ENCODE measurements at regions of chr11 and their contacts with region 1.

Region 1: DNA sequence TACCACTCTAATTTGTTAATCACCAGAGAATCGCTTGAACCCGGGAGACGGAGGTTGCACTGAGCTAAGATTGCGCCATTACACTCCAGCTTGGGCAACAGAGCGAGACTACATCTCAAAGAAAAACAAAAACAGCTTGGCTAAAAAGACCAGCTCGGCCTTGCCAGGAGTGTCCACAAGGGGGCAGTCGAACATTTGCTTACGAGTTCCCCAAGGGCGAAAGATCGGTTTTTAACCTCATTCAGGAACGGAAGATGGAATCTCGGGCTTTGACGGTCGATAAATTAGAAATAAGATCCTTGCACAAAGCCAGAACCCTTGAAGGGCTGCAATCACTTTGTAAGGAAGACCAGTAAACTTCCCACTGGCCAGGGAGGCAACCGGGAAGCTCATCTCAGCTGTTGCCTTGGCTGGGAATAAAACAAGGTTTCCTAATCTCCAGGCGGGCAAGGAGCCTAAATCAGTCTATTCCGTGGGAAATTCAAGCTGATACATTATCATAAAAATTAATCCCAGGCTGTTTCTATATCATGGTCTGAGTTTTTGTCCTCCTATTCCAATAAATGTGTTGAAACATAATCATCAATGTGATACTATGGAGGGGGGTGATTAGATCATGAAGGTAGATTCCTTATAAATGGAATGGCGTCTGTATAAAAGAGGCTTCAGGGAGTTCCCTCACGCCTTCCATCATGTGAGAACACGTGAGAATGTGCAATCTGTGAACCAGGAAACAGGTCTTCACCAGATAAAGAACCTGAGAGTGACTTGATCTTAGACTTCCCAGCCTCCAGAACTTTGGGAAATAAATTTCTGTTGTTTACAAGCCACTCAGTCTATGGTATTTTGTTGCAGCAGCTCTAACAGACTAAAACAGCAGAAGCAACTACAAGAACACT is 14.9 kb upstream of the SLC29A2 start:
- DNase-seq: peak; percentile 70 to 81 (median 76)
- H3K4me3 ChIP-seq: peak overlapping the region in 1 of 2 donors; percentile 31
- H3K4me3 Mint-ChIP-seq: peak overlapping the region in 7 of 8 donors; percentile 6 to 40 (median 12)
- H3K27ac ChIP-seq: no peak overlapping the region
- H3K27ac Mint-ChIP-seq: peak overlapping the region in 3 of 7 donors; percentile 6 to 78 (median 35)
- H3K4me1 ChIP-seq: peaks cover 7% of the 10 kb centered on the region
- H3K4me1 Mint-ChIP-seq: peaks cover 6 to 9% (median 7%) of the 10 kb centered on the region in 4 donors
- H3K27me3 ChIP-seq: no peaks in the 10 kb centered on the region
- H3K27me3 Mint-ChIP-seq: peaks cover 4 to 8% of the 10 kb centered on the region in 2 donors

Region 2: GRCh38 chr11:66328307-66329144 is 57.9 kb before region 1 on chr11:
- CTCF ChIA-PET with region 1: interaction called, 10 read pairs
- POLR2A ChIA-PET with region 1: no interaction called
- intact Hi-C with region 1: loop called (anchors 5 kb)
- DNase-seq: peak; percentile 70 to 82 (median 77)
- H3K4me3 ChIP-seq: no peak overlapping the region
- H3K4me3 Mint-ChIP-seq: peak overlapping the region in 7 of 8 donors; percentile 16 to 77 (median 35)
- H3K27ac ChIP-seq: no peak overlapping the region
- H3K27ac Mint-ChIP-seq: peak overlapping the region in 6 of 7 donors; percentile 57 to 91 (median 66)
- H3K4me1 ChIP-seq: peaks cover 29% of the 10 kb centered on the region
- H3K4me1 Mint-ChIP-seq: peaks cover 18 to 27% (median 21%) of the 10 kb centered on the region in 4 donors
- H3K27me3 ChIP-seq: no peaks in the 10 kb centered on the region
- H3K27me3 Mint-ChIP-seq: no peaks in the 10 kb centered on the region

Region 3: GRCh38 chr11:66336234-66337102 is 50.0 kb before region 1 on chr11 and contains the start of gene RIN1:
- CTCF ChIA-PET with region 1: interaction called, 10 read pairs
- POLR2A ChIA-PET with region 1: interaction called, 3 read pairs
- intact Hi-C with region 1: no loop called
- DNase-seq: peak in 3 of 5 donors; percentile 25 to 64 (median 36)
- H3K4me3 ChIP-seq: peak within 1 kb of the TSS in 1 of 2 donors; percentile 41
- H3K4me3 Mint-ChIP-seq: peak within 1 kb of the TSS; percentile 80 to 90 (median 84)
- H3K27ac ChIP-seq: peak within 1 kb of the TSS; percentile 29
- H3K27ac Mint-ChIP-seq: peak within 1 kb of the TSS in 6 of 7 donors; percentile 6 to 75 (median 58)
- H3K4me1 ChIP-seq: peaks cover 18% of the 10 kb centered on the region
- H3K4me1 Mint-ChIP-seq: peaks cover 10 to 27% (median 16%) of the 10 kb centered on the region in 4 donors
- H3K27me3 ChIP-seq: no peaks in the 10 kb centered on the region
- H3K27me3 Mint-ChIP-seq: no peaks in the 10 kb centered on the region
- total RNA-seq, gene RIN1: 5.8 to 10.1 TPM

Region 4: GRCh38 chr11:66344550-66345315 is 41.7 kb before region 1 on chr11 and contains the start of gene BRMS1:
- CTCF ChIA-PET with region 1: interaction called, 16 read pairs
- POLR2A ChIA-PET with region 1: interaction called, 3 read pairs
- intact Hi-C with region 1: loop called (anchors 5 kb)
- DNase-seq: peak; percentile 92 to 99 (median 93)
- H3K4me3 ChIP-seq: peak within 1 kb of the TSS; percentile 79 to 99
- H3K4me3 Mint-ChIP-seq: peak within 1 kb of the TSS; percentile 90 to 99 (median 97)
- H3K27ac ChIP-seq: peak within 1 kb of the TSS; percentile 84
- H3K27ac Mint-ChIP-seq: peak within 1 kb of the TSS; percentile 95 to 99 (median 98)
- H3K4me1 ChIP-seq: peaks cover 45% of the 10 kb centered on the region
- H3K4me1 Mint-ChIP-seq: peaks cover 31 to 62% (median 41%) of the 10 kb centered on the region in 4 donors
- H3K27me3 ChIP-seq: no peaks in the 10 kb centered on the region
- H3K27me3 Mint-ChIP-seq: peaks cover 1 to 4% of the 10 kb centered on the region in 2 donors
- total RNA-seq, gene BRMS1: 49.8 to 50.8 TPM

Region 5: DNA sequence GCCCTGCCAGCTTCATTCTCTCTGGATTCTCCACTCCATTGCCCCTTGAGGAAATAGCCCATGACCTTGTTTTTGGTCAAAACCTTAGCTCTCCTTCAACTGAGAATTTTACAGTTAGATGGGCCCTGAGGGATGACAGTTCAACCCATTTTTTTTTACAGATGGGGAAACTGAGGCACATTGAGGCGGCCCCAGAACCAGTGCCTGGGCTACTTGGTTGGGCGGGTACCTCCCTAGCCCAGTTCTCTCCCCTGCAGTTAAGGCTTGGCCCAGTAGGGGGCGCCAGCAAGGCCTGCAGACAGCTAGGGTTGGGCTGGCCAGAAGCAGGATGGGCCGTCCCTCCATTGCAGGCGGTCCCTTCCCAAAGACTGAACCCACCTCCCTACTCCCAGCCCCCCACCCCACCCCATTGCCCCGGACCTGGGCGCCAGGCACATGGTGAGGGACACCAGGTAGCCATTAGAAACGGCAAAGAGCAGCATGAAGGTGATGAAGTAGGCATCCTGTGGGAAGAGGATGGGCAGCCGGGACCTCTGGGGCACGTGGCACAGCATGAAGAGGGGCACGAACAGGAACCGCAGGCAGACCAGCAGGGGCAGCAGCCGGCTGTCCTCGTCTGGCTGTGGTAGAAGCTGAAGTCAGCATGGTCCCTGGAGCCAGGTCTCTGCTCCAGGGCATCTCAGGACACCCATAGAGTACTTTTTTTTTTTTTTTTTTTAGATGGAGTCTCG is 22.4 kb before region 1 on chr11:
- CTCF ChIA-PET with region 1: interaction called, 87 read pairs
- POLR2A ChIA-PET with region 1: interaction called, 3 read pairs
- intact Hi-C with region 1: loop called (anchors 2 kb)
- DNase-seq: peak; percentile 38 to 59 (median 46)
- H3K4me3 ChIP-seq: no peak overlapping the region
- H3K4me3 Mint-ChIP-seq: no peak overlapping the region
- H3K27ac ChIP-seq: no peak overlapping the region
- H3K27ac Mint-ChIP-seq: peak overlapping the region in 2 of 7 donors; percentile 12 to 16
- H3K4me1 ChIP-seq: no peaks in the 10 kb centered on the region
- H3K4me1 Mint-ChIP-seq: peaks cover 0 to 2% (median under 1%) of the 10 kb centered on the region in 4 donors
- H3K27me3 ChIP-seq: no peaks in the 10 kb centered on the region
- H3K27me3 Mint-ChIP-seq: no peaks in the 10 kb centered on the region

Region 6: DNA sequence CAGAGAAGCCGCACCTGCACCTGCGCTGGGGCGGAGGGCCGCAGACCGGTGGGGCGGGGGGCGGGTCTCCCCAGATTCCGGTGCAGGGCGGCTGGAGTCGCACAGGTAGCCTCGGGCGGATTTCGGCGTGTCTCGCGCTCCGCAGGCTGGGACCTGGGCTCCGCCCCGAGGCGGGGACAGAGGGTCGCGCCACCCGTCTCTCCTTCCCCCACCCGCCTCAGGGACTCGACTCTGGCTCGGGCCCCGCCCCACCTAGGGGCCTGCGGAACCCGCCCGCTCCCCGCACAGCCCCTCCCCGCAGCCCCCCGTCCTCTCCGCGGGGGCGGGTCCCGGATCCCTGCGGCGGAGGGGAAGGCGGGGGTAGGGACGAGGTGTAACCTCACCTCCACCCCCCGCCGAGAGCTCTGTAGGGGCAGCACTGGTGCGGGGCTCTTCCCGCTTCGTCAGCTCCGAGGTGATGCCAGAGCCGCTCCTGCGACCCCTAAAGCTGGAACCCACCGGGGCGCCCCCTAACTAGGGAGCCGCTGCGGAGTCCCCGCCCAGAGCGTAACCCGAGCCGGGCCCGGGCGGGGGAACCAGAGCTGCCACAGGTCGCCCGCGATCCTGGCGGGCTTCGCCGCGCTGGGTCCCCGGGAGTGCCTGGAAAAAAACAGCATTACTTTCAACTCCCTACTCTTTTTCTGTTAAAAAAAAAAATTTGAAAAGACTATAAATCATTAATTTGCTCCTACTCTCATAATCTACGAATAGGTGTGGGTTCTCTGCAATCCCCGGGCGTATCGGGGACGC is 14.6 kb before region 1 on chr11 and contains the start of gene SLC29A2:
- CTCF ChIA-PET with region 1: interaction called, 87 read pairs
- POLR2A ChIA-PET with region 1: interaction called, 16 read pairs
- intact Hi-C with region 1: loop called (anchors 2 kb)
- DNase-seq: peak; percentile 72 to 78 (median 72)
- H3K4me3 ChIP-seq: peak within 1 kb of the TSS; percentile 49 to 71
- H3K4me3 Mint-ChIP-seq: peak within 1 kb of the TSS; percentile 88 to 95 (median 92)
- H3K27ac ChIP-seq: peak within 1 kb of the TSS; percentile 61
- H3K27ac Mint-ChIP-seq: peak within 1 kb of the TSS; percentile 83 to 95 (median 94)
- H3K4me1 ChIP-seq: peaks cover 12% of the 10 kb centered on the region
- H3K4me1 Mint-ChIP-seq: peaks cover 5 to 17% (median 12%) of the 10 kb centered on the region in 4 donors
- H3K27me3 ChIP-seq: no peaks in the 10 kb centered on the region
- H3K27me3 Mint-ChIP-seq: no peaks in the 10 kb centered on the region
- total RNA-seq, gene SLC29A2: 15.0 to 15.5 TPM

Region 7: DNA sequence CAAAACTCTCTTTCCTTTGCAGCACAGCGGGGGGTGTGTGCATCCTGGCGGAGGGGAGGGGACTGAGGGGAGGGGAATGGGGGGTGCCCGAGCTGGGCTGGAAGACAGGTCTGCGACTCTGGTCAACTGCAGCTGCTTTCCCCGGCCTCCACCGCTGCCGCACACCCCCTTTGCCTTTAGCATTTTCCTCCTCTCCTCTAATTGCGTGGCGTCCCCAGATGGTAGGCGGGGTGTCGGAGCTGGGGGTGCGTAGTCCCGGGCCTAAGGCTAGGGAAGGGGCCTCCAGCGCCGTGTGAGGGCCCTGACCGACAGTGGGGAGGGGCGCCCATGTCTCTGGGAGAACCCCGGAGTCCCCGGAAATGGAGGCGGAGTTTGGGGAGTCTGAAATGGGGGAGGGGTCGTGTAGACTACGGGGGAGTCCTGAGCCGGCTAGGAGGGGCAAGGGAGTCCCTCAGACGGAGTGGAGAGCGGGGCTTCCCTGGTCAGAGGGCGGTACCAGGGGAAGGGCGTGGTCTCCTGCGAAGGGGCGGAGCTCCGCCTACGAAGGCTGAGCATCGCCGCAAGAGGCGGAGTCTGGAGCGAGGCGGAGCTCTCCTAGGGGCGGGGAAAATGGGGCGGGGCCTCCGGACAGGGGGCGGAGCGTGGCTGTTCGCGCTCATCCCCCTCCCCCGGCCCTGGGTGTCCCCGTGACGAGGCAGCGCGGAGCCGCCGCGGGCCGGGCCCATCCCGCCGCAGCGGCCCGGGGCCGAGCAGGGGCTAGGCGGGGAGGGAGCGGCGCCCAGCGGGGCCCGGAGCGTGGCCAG is 80.0 kb after region 1 on chr11 and contains the start of gene PELI3:
- CTCF ChIA-PET with region 1: no interaction called
- POLR2A ChIA-PET with region 1: no interaction called
- intact Hi-C with region 1: no loop called
- DNase-seq: peak; percentile 91 to 95 (median 92)
- H3K4me3 ChIP-seq: peak within 1 kb of the TSS; percentile 58 to 65
- H3K4me3 Mint-ChIP-seq: peak within 1 kb of the TSS; percentile 89 to 94 (median 90)
- H3K27ac ChIP-seq: peak within 1 kb of the TSS; percentile 81
- H3K27ac Mint-ChIP-seq: peak within 1 kb of the TSS; percentile 91 to 97 (median 95)
- H3K4me1 ChIP-seq: peaks cover 20% of the 10 kb centered on the region
- H3K4me1 Mint-ChIP-seq: peaks cover 13 to 33% (median 21%) of the 10 kb centered on the region in 4 donors
- H3K27me3 ChIP-seq: no peaks in the 10 kb centered on the region
- H3K27me3 Mint-ChIP-seq: no peaks in the 10 kb centered on the region
- total RNA-seq, gene PELI3: 25.3 to 25.9 TPM

Measured in CD4-positive, alpha-beta memory T cell (primary cell).